Dendritic cell treated with granulocyte-macrophage colony-stimulating factor and Interleukin-4, amounts not matched to agents 40 ng/mL and 50 ng/mL, for 4 days (primary cell): ENCODE measurements at regions of chr1 and their contacts with region 1.

Region 1: GRCh38 chr1:90579212-90579802 is 137.8 kb downstream of the BARHL2 start:
- H3K4me3 Mint-ChIP-seq: no peak overlapping the region
- H3K27ac Mint-ChIP-seq: no peak overlapping the region
- H3K4me1 Mint-ChIP-seq: no peaks in the 10 kb centered on the region
- H3K27me3 Mint-ChIP-seq: no peaks in the 10 kb centered on the region

Region 2: DNA sequence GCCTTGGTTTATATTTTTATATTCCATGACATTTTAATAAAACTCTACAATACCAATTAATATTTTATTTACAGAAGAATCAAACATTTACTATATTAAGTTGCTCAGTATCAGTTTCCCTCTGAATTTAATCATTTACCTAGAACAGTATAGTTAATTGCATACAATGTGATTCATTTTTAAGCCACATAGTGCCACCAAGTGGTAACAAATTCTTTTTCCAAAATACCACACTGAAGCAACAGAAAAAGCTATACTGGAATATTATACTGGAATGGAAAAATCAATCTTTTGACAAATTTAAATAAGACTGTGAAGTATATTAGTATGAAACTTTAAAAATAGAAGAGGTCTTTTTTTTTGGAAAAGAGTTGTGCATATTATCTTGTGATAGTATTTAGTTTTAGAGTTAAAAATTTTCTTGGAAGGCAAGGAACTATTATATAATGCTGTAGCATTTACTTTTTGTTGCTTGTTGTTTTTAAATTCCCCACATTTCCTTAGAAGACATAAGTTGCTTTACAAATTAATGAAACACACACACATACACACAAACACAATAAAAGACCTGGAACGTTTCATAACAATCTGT is 385.2 kb after region 1 on chr1:
- intact Hi-C with region 1: loop called (anchors 5 kb)
- H3K4me3 Mint-ChIP-seq: no peak overlapping the region
- H3K27ac Mint-ChIP-seq: no peak overlapping the region
- H3K4me1 Mint-ChIP-seq: peaks cover 36% of the 10 kb centered on the region
- H3K27me3 Mint-ChIP-seq: no peaks in the 10 kb centered on the region